H1 (cell line): ENCODE measurements at regions of chr12 and their contacts with region 1.

Region 1: GRCh38 chr12:6647083-6647604 is at the start of gene ACRBP:
- DNase-seq: peak in 1 of 2 experiments; percentile 86
- H3K4me3 ChIP-seq: peak within 1 kb of the TSS; percentile 59 to 80 (median 68)
- H3K27ac ChIP-seq: no peak within 1 kb of the TSS
- H3K4me1 ChIP-seq: peaks cover 0 to 5% (median under 1%) of the 10 kb centered on the region in 4 experiments; a peak in 2 of 7 replicates
- H3K27me3 ChIP-seq: peaks cover 3 to 7% (median 6%) of the 10 kb centered on the region in 4 experiments; a peak in 4 of 7 replicates
- CTCF ChIP-seq: no peak
- EP300 ChIP-seq: no peak
- POLR2A ChIP-seq: no peak
- RAD21 ChIP-seq: no peak
- total RNA-seq, gene ACRBP: 0.80 and 1.2 TPM in 2 replicates

Region 2: GRCh38 chr12:6613776-6614512 is 33.2 kb before region 1 on chr12:
- CTCF ChIA-PET with region 1: interaction called, 146 read pairs
- POLR2A ChIA-PET with region 1: interaction called, 18 read pairs
- DNase-seq: peak; percentile 82 to 86
- H3K4me3 ChIP-seq: peak overlapping the region in 2 of 4 experiments; percentile 0 to 32; a peak in 1 of 8 replicates
- H3K27ac ChIP-seq: peak overlapping the region; percentile 44; the same call in 1 of the 2 replicates
- H3K4me1 ChIP-seq: peaks cover 15 to 21% (median 17%) of the 10 kb centered on the region in 4 experiments
- H3K27me3 ChIP-seq: peaks cover 0 to 3% (median 1%) of the 10 kb centered on the region in 4 experiments; a peak in 2 of 7 replicates
- CTCF ChIP-seq: peak; percentile 27 to 63 (median 34); a peak in 3 of 4 replicates
- EP300 ChIP-seq: no peak
- POLR2A ChIP-seq: no peak
- RAD21 ChIP-seq: peak in 1 of 2 experiments; percentile 10; a peak in 1 of 4 replicates

Region 3: GRCh38 chr12:6632026-6632983 is 14.8 kb before region 1 on chr12:
- CTCF ChIA-PET with region 1: interaction called, 38 read pairs
- POLR2A ChIA-PET with region 1: interaction called, 9 read pairs
- DNase-seq: no peak
- H3K4me3 ChIP-seq: no peak overlapping the region
- H3K27ac ChIP-seq: no peak overlapping the region
- H3K4me1 ChIP-seq: peaks cover 0 to 11% (median 2%) of the 10 kb centered on the region in 4 experiments; a peak in 5 of 7 replicates
- H3K27me3 ChIP-seq: no peaks in the 10 kb centered on the region
- CTCF ChIP-seq: no peak
- EP300 ChIP-seq: no peak
- POLR2A ChIP-seq: no peak
- RAD21 ChIP-seq: no peak

Region 4: GRCh38 chr12:6904280-6905278 is 257.4 kb after region 1 on chr12 and contains the start of gene LRRC23:
- CTCF ChIA-PET with region 1: no interaction called
- POLR2A ChIA-PET with region 1: no interaction called
- DNase-seq: peak; percentile 96 to 98
- H3K4me3 ChIP-seq: peak within 1 kb of the TSS; percentile 46 to 64 (median 52)
- H3K27ac ChIP-seq: peak within 1 kb of the TSS; percentile 76
- H3K4me1 ChIP-seq: peaks cover 3 to 12% (median 11%) of the 10 kb centered on the region in 4 experiments; a peak in 5 of 7 replicates
- H3K27me3 ChIP-seq: peaks cover 0 to 4% (median 0%) of the 10 kb centered on the region in 4 experiments; a peak in 4 of 7 replicates
- CTCF ChIP-seq: no peak
- EP300 ChIP-seq: peak in 1 of 2 experiments; percentile 72; a peak in 1 of 3 replicates
- POLR2A ChIP-seq: peak in 1 of 2 experiments; percentile 76; a peak in 1 of 3 replicates
- RAD21 ChIP-seq: no peak
- total RNA-seq, gene LRRC23: 2.5 and 2.9 TPM in 2 replicates